Dorsolateral prefrontal cortex (tissue), 120 donors: ENCODE measurements at regions of chr11 and their contacts with region 1.

Region 1: GRCh38 chr11:130213143-130213978 is 53.8 kb downstream of the ST14 start:
- DNase-seq: peak; percentile 42 to 84 (median 65)
- H3K4me3 ChIP-seq: peak overlapping the region in 18 of 59 donors; percentile 6 to 46 (median 26)
- H3K27ac ChIP-seq: peak overlapping the region in 3 of 59 donors; percentile 0 to 38 (median 21)
- H3K27me3 ChIP-seq: no peaks in the 10 kb centered on the region
- CTCF ChIP-seq: peak; percentile 73 to 99 (median 96)

Region 2: DNA sequence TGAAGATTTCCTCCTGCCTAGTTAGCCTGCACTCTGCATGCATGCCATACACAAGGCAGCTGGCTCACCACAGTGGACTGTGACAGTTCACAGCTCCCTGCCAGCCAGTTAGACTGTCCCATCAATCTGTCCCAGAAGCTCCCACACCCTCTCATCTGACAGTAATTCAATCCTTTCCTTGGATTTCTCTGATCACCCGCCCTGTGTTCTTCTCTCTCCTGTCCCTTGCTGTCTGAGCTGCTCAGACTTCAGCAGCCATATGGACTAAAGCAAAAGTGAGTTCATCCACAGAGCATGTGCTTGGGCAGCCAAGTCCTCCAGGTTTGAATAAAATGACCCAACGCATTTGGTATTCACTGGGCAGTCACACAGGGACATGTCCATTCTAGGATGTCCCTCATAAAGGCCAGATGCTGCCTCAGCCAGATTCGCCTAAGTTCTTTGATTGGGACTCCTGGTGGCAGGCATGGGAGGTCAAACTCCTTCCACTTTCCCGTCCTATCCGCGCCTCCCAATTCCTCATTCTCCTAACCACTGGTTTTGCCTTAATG is 155.9 kb after region 1 on chr11:
- intact Hi-C with region 1: loop called in 1 of 2 experiments (anchors 5 kb)
- DNase-seq: peak in 9 of 10 donors; percentile 40 to 83 (median 71)
- H3K4me3 ChIP-seq: peak overlapping the region in 42 of 59 donors; percentile 1 to 54 (median 22)
- H3K27ac ChIP-seq: peak overlapping the region in 58 of 59 donors; percentile 49 to 98 (median 92)
- H3K27me3 ChIP-seq: no peaks in the 10 kb centered on the region
- CTCF ChIP-seq: peak in 7 of 56 donors; percentile 4 to 8 (median 7)

Region 3: DNA sequence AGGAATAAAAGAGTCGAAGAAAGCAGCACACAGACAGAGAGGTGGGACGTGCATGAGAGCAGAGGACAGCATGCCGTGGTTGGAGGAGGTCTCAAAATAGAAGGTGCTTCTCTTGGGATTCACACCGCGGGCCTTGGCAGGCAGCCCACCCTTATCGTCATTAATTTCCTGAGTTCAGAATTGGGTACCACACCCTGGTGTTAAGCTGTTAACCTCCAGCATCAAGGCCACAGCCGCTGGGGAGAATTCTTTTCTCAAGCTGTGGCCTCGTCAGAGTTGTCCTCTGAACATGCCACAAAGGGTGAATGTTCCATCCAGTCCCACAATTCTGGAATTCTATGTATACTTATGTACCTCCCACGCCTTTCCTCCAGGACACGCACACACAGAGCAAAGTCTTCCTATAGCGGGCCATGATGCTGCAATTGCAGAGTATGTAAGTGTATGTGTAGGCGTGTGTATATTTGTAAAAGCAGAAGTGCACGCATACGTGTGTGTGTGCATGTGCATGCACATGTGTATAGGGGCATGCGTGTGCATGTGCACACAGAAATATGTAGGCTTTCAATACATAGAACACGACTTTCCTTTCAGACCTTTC is 176.1 kb after region 1 on chr11:
- intact Hi-C with region 1: loop called (anchors 5 to 10 kb)
- DNase-seq: peak in 2 of 10 donors; percentile 25 to 38
- H3K4me3 ChIP-seq: peak overlapping the region in 7 of 59 donors; percentile 0 to 15 (median 8)
- H3K27ac ChIP-seq: peak overlapping the region in 46 of 59 donors; percentile 0 to 76 (median 44)
- H3K27me3 ChIP-seq: no peaks in the 10 kb centered on the region
- CTCF ChIP-seq: no peak

Region 4: GRCh38 chr11:130644187-130644586 is 430.8 kb after region 1 on chr11:
- intact Hi-C with region 1: no loop called
- DNase-seq: no peak
- H3K4me3 ChIP-seq: no peak overlapping the region
- H3K27ac ChIP-seq: no peak overlapping the region
- H3K27me3 ChIP-seq: peaks cover 0 to 8% (median 0%) of the 10 kb centered on the region in 45 donors
- CTCF ChIP-seq: no peak

Region 5: GRCh38 chr11:130861902-130862860 is 648.8 kb after region 1 on chr11:
- intact Hi-C with region 1: loop called (anchors 5 to 10 kb)
- DNase-seq: peak; percentile 87 to 95 (median 92)
- H3K4me3 ChIP-seq: peak overlapping the region in 57 of 59 donors; percentile 4 to 65 (median 45)
- H3K27ac ChIP-seq: peak overlapping the region in 12 of 59 donors; percentile 6 to 79 (median 41)
- H3K27me3 ChIP-seq: no peaks in the 10 kb centered on the region
- CTCF ChIP-seq: peak; percentile 97 to 100 (median 100)

Region 6: GRCh38 chr11:130916238-130916855 is 703.0 kb after region 1 on chr11 and contains the start of gene SNX19:
- intact Hi-C with region 1: loop called in 1 of 2 experiments (anchors 10 kb)
- DNase-seq: peak; percentile 85 to 95 (median 91)
- H3K4me3 ChIP-seq: peak within 1 kb of the TSS; percentile 68 to 100 (median 93)
- H3K27ac ChIP-seq: peak within 1 kb of the TSS; percentile 20 to 95 (median 82)
- H3K27me3 ChIP-seq: no peaks in the 10 kb centered on the region
- CTCF ChIP-seq: peak; percentile 84 to 100 (median 98)
- total RNA-seq, gene SNX19: 61.4 to 132 (median 93.3) TPM